HCT116 (cell line): ENCODE measurements at regions of chr13 and their contacts with region 1.

Region 1: GRCh38 chr13:102580552-102581169 is 16.1 kb upstream of the TPP2 start:
- DNase-seq: peak; percentile 68
- ATAC-seq: peak; percentile 87
- H3K4me3 ChIP-seq: no peak overlapping the region
- H3K27ac ChIP-seq: no peak overlapping the region
- H3K4me1 ChIP-seq: no peaks in the 10 kb centered on the region
- H3K27me3 ChIP-seq: peaks cover 21% of the 10 kb centered on the region; the same call in 1 of the 2 replicates
- CTCF ChIP-seq: peak; percentile 67; a peak in 5 of 6 replicates
- POLR2A ChIP-seq: no peak
- RAD21 ChIP-seq: peak; percentile 80

Region 2: DNA sequence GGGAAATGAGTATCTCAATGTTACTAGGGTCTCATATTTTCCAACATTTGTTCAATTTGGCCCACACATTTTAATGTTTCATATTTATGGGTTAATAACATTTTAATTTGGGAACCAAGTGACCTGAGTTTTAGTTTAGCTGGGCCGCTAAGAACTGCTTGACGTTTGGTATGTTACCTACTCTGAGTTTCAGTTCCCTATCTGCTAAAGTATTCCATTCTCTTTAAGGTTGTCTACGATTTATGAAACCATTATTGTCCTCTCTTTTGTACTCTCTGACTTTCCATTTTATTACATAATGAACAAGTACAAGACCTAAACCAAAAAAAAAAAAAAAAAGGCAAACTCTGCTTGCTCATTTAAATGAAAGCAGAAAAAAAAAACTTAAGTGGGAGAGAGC is 268.8 kb before region 1 on chr13:
- CTCF ChIA-PET with region 1: no interaction called
- POLR2A ChIA-PET with region 1: no interaction called
- RAD21 ChIA-PET with region 1: no interaction called
- intact Hi-C with region 1: no loop called
- DNase-seq: no peak
- ATAC-seq: no peak
- H3K4me3 ChIP-seq: no peak overlapping the region
- H3K27ac ChIP-seq: no peak overlapping the region
- H3K4me1 ChIP-seq: no peaks in the 10 kb centered on the region
- H3K27me3 ChIP-seq: no peaks in the 10 kb centered on the region
- CTCF ChIP-seq: no peak
- POLR2A ChIP-seq: no peak
- RAD21 ChIP-seq: no peak

Region 3: DNA sequence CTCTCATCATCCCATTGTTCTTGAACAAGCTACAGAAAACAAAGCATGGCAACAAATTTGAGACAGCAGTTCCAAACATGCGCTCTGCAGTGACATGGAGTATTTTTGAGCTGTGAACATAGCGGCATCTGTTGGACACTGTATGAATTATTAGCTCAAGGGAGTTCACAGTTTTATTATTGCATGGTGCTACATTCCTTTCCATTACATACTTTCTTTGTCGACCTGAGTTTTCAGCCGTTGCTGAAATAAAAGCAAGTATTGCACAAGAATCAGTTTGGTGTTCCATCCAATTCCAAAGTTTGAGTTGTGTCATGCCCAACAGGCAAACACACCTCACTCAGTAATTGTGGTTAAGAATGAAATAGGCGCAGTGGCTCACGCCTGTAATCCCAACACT is 144.3 kb after region 1 on chr13:
- CTCF ChIA-PET with region 1: interaction called, 14 read pairs
- POLR2A ChIA-PET with region 1: no interaction called
- RAD21 ChIA-PET with region 1: interaction called in 1 of 2 experiments, 4 read pairs
- intact Hi-C with region 1: loop called (anchors 1 kb)
- DNase-seq: no peak
- ATAC-seq: peak; percentile 87
- H3K4me3 ChIP-seq: no peak overlapping the region
- H3K27ac ChIP-seq: no peak overlapping the region
- H3K4me1 ChIP-seq: peaks cover 0 to 4% of the 10 kb centered on the region in 2 experiments; a peak in 2 of 4 replicates
- H3K27me3 ChIP-seq: peaks cover 37% of the 10 kb centered on the region
- CTCF ChIP-seq: peak; percentile 51 to 64 (median 51); a peak in 5 of 6 replicates
- POLR2A ChIP-seq: no peak
- RAD21 ChIP-seq: peak; percentile 68

Region 4: DNA sequence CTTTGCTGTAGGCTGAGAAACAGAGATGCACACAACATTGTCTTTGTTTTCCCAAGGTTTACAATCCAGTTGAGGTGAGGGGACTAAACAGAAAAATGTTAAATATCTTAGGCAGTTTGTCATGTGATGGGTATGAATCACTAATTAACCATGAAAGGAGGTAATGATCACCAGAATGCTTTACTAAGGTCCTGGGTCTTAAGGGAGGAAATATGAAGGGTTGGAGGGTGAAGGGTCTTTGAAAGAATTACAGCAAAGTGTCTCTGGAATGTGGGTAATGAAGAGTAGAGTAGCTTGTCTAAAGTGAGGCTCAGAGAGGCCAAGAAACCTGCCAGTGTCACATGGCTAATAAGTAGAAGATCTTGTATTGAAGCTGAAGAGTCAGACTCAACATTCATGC is 237.2 kb after region 1 on chr13:
- CTCF ChIA-PET with region 1: no interaction called
- POLR2A ChIA-PET with region 1: no interaction called
- RAD21 ChIA-PET with region 1: no interaction called
- intact Hi-C with region 1: no loop called
- DNase-seq: no peak
- ATAC-seq: no peak
- H3K4me3 ChIP-seq: no peak overlapping the region
- H3K27ac ChIP-seq: no peak overlapping the region
- H3K4me1 ChIP-seq: no peaks in the 10 kb centered on the region
- H3K27me3 ChIP-seq: no peaks in the 10 kb centered on the region
- CTCF ChIP-seq: no peak
- POLR2A ChIP-seq: no peak
- RAD21 ChIP-seq: no peak